ENCODE measurements at regions of chr12 and their contacts with region 1.

Region 1: GRCh38 chr12:108562348-108563135 is at the start of gene ISCU:
- DNase-seq: peak; percentile 98
- ATAC-seq: peak; percentile 78
- H3K4me3 Mint-ChIP-seq: peak within 1 kb of the TSS; percentile 100
- H3K27ac Mint-ChIP-seq: peak within 1 kb of the TSS; percentile 100
- H3K4me1 Mint-ChIP-seq: peaks cover 67% of the 10 kb centered on the region
- H3K27me3 Mint-ChIP-seq: no peaks in the 10 kb centered on the region
- total RNA-seq, gene ISCU: 58.5 to 59.5 TPM

Region 2: DNA sequence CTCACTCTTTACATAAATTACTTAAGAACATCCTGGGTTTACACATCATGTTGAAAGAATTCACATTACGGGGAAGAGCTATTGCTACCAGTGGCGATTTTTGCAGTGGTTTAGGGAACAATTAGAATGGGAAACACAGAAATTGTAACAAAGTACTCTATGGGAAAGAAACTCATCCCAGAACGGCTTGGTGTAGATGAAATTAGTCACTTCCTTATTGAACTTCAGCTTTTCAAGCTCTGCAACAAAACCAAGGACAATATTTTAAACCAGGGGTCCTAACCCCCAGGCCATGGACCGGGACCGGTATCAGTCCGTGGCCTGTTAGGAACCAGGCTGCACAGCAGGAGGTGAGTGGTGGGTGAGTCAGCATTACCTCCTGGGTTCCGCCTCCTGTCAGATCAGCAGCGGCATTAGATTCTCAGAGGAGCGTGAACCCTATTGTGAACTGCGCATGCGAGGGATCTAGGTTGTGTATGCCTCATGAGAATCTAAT is 79.8 kb before region 1 on chr12:
- CTCF ChIA-PET with region 1: no interaction called
- POLR2A ChIA-PET with region 1: no interaction called
- DNase-seq: no peak
- ATAC-seq: no peak
- H3K4me3 Mint-ChIP-seq: no peak overlapping the region
- H3K27ac Mint-ChIP-seq: no peak overlapping the region
- H3K4me1 Mint-ChIP-seq: peaks cover 3% of the 10 kb centered on the region
- H3K27me3 Mint-ChIP-seq: peaks cover 11% of the 10 kb centered on the region

Region 3: DNA sequence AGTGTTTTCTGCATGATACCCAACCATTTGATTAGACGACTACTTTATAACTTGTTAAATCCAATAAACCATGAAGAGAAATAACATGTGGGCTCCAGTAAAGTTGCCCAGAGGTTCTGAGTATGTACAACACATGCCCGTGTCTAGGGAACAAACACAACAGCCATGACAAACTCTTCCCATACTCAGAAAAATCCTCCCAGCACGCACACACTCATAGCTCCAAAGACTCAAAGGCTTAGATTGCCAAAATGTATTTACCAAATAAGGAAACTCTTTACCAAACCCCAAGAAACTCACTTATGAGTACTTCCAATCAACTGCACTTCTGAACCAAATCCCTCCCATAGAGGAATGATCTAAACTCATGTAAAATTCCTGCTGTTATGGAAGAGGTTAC is 18.9 kb before region 1 on chr12:
- CTCF ChIA-PET with region 1: interaction called, 10 read pairs
- POLR2A ChIA-PET with region 1: interaction called, 11 read pairs
- DNase-seq: peak; percentile 13
- ATAC-seq: no peak
- H3K4me3 Mint-ChIP-seq: no peak overlapping the region
- H3K27ac Mint-ChIP-seq: no peak overlapping the region
- H3K4me1 Mint-ChIP-seq: peaks cover 2% of the 10 kb centered on the region
- H3K27me3 Mint-ChIP-seq: no peaks in the 10 kb centered on the region

Region 4: DNA sequence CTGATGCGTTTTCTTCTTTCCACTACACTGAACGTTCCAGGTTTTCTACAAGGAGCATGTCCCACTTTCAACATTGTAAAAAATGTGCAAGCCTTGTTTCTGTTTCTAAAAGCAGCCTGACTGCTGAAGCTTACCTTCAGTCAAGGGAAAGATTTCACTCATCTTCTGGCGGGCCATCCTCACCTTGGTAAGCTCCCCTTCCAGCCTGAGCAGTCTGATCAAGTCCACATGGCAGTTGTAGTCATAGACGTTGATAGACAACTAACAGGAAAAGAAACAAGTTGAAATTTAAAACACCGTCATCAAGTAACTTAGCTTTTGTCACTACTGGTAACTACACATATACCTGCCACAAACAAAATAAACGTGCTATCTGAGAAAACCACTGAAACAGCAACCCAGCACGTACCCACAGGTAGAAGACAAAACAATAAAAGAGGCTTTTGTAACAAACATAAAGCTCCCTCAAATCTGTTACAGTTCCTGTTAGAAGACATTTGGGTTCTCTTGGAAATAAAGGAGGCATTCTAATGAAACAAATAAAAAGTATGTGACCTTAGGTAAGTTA is 13.5 kb before region 1 on chr12:
- CTCF ChIA-PET with region 1: interaction called, 10 read pairs
- POLR2A ChIA-PET with region 1: interaction called, 11 read pairs
- DNase-seq: peak; percentile 8
- ATAC-seq: no peak
- H3K4me3 Mint-ChIP-seq: no peak overlapping the region
- H3K27ac Mint-ChIP-seq: no peak overlapping the region
- H3K4me1 Mint-ChIP-seq: peaks cover 37% of the 10 kb centered on the region
- H3K27me3 Mint-ChIP-seq: no peaks in the 10 kb centered on the region

Region 5: DNA sequence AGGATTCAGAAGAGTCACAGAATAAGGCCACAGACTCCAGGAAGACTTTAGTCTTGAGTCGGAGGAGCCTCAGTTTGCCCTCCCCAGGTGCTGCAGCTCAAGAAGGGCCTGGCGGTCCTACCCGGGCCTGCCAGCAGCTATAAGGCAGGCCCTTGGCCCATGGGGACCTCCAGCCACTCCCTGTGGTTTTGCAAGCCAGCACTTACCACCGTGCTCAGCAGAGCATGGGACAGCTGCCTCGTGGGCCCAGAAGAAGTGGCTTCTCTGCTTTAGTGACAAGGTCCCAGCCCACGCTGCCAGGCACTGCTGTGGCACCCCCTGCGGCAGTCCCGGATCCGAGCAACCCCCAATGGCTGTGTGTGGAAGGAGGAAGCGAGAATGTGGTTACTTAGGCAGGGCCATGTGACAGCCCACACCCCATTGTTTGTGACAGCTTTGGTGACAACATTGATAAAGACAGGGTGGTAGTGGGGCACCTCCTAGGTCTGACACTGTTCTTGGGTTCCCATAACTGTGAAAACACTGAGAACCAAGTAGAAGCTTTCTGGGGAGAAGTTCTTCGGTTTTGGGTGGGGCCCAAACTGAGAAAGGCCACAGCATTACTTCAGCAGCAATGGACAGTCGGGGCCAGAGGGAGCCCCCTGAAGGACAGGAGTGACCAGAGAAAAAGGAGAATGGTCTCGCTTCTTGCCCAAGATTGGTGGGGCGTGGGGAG is 71.1 kb after region 1 on chr12 and contains the start of gene SELPLG:
- CTCF ChIA-PET with region 1: interaction called, 29 read pairs
- POLR2A ChIA-PET with region 1: interaction called, 121 read pairs
- DNase-seq: peak; percentile 92
- ATAC-seq: peak; percentile 59
- H3K4me3 Mint-ChIP-seq: peak within 1 kb of the TSS; percentile 100
- H3K27ac Mint-ChIP-seq: peak within 1 kb of the TSS; percentile 99
- H3K4me1 Mint-ChIP-seq: peaks cover 63% of the 10 kb centered on the region
- H3K27me3 Mint-ChIP-seq: no peaks in the 10 kb centered on the region
- total RNA-seq, gene SELPLG: 144 to 150 TPM

Region 6: GRCh38 chr12:108752387-108752786 is 189.8 kb after region 1 on chr12:
- CTCF ChIA-PET with region 1: no interaction called
- POLR2A ChIA-PET with region 1: no interaction called
- DNase-seq: no peak
- ATAC-seq: no peak
- H3K4me3 Mint-ChIP-seq: no peak overlapping the region
- H3K27ac Mint-ChIP-seq: no peak overlapping the region
- H3K4me1 Mint-ChIP-seq: no peaks in the 10 kb centered on the region
- H3K27me3 Mint-ChIP-seq: no peaks in the 10 kb centered on the region